HCT116 (cell line): ENCODE measurements at regions of chr21 and their contacts with region 1.

Region 1: DNA sequence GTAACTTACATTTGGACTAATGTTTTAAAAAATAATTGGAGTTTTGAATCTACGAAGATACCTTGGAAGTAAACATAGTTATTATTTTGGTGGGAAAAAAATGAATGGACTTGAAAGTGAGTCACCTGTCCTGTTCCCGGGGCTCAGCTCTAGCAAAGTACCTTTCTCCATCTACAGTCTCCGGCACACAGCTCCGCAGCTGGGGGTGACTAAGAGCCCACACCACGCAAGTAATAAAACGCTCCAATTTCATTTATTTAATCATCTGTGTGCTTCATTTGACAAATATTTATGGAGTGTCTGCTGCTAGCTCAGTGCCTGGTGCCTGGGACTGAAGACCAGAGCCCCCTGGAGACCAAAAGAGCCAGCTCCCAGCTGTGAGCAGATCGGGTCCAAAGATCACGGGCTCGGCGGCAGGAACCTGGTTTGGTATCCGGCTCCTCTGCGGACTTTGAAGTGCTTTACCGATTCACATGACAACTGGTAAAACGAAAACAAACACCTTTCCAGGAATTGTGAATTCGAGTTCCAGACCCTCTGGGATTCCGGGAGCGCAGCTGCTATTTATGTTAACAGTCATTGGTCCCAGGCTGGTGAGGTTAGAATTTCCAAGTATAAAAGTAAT is 1.7 kb upstream of the RIPK4 start:
- DNase-seq: peak; percentile 32
- ATAC-seq: peak; percentile 51
- H3K4me3 ChIP-seq: peak overlapping the region; percentile 74 to 81
- H3K27ac ChIP-seq: no peak overlapping the region
- H3K4me1 ChIP-seq: peaks cover 33 to 39% of the 10 kb centered on the region in 2 experiments
- H3K27me3 ChIP-seq: peaks cover 37% of the 10 kb centered on the region
- CTCF ChIP-seq: peak in 2 of 3 experiments; percentile 39 to 55; a peak in 4 of 6 replicates
- POLR2A ChIP-seq: no peak
- RAD21 ChIP-seq: peak; percentile 52

Region 2: DNA sequence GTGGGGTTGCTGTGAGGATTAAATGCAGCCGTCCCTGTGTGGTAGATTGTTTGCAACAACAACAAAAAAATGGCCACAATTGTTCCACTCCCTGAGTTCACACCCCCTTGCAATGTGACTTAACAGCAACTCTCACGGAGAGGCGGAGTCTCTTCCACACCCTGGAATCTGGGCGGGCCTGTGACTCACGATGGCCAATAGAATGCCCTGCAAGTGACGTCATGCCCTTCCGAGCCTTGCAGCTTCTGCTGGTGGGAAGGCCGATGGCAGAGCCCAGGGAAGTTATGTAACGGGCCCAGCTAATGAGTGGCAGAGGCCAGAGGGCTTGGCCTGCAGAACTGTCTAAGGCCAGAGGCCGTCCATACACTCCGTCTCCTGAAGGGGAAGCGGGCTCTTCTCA is 89.6 kb before region 1 on chr21:
- CTCF ChIA-PET with region 1: no interaction called
- POLR2A ChIA-PET with region 1: interaction called, 4 read pairs
- RAD21 ChIA-PET with region 1: no interaction called
- intact Hi-C with region 1: loop called (anchors 5 kb)
- DNase-seq: peak; percentile 96
- ATAC-seq: peak; percentile 98
- H3K4me3 ChIP-seq: peak overlapping the region; percentile 29 to 41
- H3K27ac ChIP-seq: peak overlapping the region; percentile 83
- H3K4me1 ChIP-seq: peaks cover 26 to 33% of the 10 kb centered on the region in 2 experiments
- H3K27me3 ChIP-seq: no peaks in the 10 kb centered on the region
- CTCF ChIP-seq: no peak
- POLR2A ChIP-seq: no peak
- RAD21 ChIP-seq: no peak

Region 3: DNA sequence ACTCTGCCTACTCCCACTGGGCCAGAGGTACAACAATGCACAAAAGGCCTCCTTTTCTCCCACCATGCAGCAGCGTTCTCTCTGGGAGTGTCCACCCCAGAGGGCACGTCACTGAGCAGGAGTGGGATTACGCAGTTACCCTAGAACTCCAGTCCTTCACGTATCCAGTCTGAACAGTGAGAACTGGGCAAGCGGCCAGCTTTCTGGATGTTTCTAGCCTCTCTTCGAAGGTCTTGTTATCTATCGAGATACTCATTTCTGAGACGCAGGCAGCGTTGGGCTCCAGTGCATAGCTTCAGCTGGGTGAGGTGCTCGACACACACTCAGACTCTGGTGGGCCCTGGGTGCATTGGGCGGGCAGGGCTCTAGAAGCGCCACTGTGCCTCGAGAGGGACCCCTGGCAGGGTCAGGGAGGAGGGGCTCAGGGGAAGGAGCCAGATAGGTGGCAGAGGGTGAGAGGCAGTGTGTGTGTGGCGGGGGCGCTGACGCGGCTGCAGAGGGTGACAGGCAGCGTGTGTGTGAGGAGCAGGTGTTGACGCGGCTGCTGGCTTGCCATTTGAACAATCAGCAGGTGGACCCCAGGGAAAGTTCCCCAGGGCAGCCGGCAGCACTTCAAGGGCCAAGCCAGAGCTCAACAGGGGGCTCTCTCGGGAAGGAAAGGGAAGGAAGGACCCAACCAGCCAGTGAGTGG is 82.7 kb after region 1 on chr21:
- CTCF ChIA-PET with region 1: no interaction called
- POLR2A ChIA-PET with region 1: no interaction called
- RAD21 ChIA-PET with region 1: no interaction called
- intact Hi-C with region 1: no loop called
- DNase-seq: no peak
- ATAC-seq: no peak
- H3K4me3 ChIP-seq: no peak overlapping the region
- H3K27ac ChIP-seq: no peak overlapping the region
- H3K4me1 ChIP-seq: no peaks in the 10 kb centered on the region
- H3K27me3 ChIP-seq: no peaks in the 10 kb centered on the region
- CTCF ChIP-seq: no peak
- POLR2A ChIP-seq: no peak
- RAD21 ChIP-seq: no peak